ENCODE measurements at regions of chr16 and their contacts with region 1.

Region 1: GRCh38 chr16:74606521-74607310 is at the start of gene GLG1:
- DNase-seq: peak; percentile 92
- H3K4me3 Mint-ChIP-seq: peak within 1 kb of the TSS; percentile 92
- H3K27ac Mint-ChIP-seq: peak within 1 kb of the TSS; percentile 86
- H3K4me1 Mint-ChIP-seq: peaks cover 62% of the 10 kb centered on the region
- H3K27me3 Mint-ChIP-seq: no peaks in the 10 kb centered on the region
- total RNA-seq, gene GLG1: 130 to 132 TPM

Region 2: GRCh38 chr16:74577882-74578366 is 28.8 kb before region 1 on chr16:
- CTCF ChIA-PET with region 1: interaction called, 3 read pairs
- POLR2A ChIA-PET with region 1: interaction called, 21 read pairs
- DNase-seq: no peak
- H3K4me3 Mint-ChIP-seq: peak overlapping the region; percentile 27
- H3K27ac Mint-ChIP-seq: peak overlapping the region; percentile 12
- H3K4me1 Mint-ChIP-seq: peaks cover 41% of the 10 kb centered on the region
- H3K27me3 Mint-ChIP-seq: no peaks in the 10 kb centered on the region

Region 3: DNA sequence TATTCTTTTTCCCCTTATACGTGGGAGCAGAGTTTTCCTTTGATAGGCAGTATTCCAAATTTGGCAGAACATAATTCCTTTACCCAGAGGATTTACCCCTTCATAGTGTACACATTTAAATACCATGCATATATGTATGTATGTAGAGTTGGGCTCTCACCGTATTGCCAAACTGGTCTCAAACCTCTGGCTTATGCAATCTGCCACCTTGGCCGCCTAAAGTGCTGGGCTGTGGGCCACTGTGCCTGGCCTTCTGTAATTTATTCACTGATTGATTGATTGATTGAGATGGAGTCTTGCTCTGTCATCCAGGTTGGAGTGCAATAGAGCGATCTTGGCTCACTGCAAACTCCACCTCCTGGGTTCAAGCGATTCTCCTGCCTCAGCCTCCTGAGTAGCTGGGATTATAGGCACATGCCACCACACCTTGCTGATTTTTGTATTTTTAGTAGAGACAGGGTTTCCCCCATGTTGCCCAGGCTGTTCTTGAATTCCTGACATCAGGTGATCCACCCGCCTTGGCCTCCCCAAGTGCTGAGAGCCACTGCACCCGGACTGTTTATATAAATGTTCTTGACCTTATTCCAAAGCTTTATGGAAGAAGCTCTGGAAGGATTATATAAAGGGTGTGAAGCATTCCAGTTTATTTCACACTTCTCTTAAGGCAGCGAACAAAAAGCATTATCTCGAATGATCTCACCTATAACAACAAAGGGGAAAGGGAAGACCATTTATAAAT is 14.7 kb before region 1 on chr16:
- CTCF ChIA-PET with region 1: interaction called, 3 read pairs
- POLR2A ChIA-PET with region 1: interaction called, 12 read pairs
- DNase-seq: no peak
- H3K4me3 Mint-ChIP-seq: no peak overlapping the region
- H3K27ac Mint-ChIP-seq: no peak overlapping the region
- H3K4me1 Mint-ChIP-seq: peaks cover 32% of the 10 kb centered on the region
- H3K27me3 Mint-ChIP-seq: no peaks in the 10 kb centered on the region

Region 4: GRCh38 chr16:74617206-74617788 is 10.6 kb after region 1 on chr16:
- CTCF ChIA-PET with region 1: interaction called, 6 read pairs
- POLR2A ChIA-PET with region 1: interaction called, 11 read pairs
- DNase-seq: no peak
- H3K4me3 Mint-ChIP-seq: no peak overlapping the region
- H3K27ac Mint-ChIP-seq: no peak overlapping the region
- H3K4me1 Mint-ChIP-seq: peaks cover 2% of the 10 kb centered on the region
- H3K27me3 Mint-ChIP-seq: no peaks in the 10 kb centered on the region

Measured in activated CD4-positive, alpha-beta memory T cell treated with anti-CD3 and anti-CD28 coated beads, Interleukin-2, amount 10 ng/mL, durations not matched to agents 7 days and 5 days (primary cell).